G401 (cell line): ENCODE measurements at regions of chr17 and their contacts with region 1.

Region 1: DNA sequence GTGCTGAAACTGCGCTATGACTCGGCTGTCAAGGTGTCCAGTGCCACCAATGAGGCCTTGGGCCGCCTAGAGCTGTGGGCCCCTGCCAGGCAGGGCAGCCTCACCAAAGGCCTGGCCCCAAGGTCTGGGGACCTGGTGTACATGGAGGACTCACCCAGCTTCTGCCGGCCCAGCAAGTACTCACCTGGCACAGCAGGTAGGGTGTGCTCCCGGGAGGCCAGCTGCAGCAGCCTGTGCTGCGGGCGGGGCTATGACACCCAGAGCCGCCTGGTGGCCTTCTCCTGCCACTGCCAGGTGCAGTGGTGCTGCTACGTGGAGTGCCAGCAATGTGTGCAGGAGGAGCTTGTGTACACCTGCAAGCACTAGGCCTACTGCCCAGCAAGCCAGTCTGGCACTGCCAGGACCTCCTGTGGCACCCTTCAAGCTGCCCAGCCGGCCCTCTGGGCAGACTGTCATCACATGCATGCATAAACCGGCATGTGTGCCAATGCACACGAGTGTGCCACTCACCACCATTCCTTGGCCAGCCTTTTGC is 25.0 kb downstream of the WNT9B start:
- DNase-seq: peak; percentile 92

Region 2: DNA sequence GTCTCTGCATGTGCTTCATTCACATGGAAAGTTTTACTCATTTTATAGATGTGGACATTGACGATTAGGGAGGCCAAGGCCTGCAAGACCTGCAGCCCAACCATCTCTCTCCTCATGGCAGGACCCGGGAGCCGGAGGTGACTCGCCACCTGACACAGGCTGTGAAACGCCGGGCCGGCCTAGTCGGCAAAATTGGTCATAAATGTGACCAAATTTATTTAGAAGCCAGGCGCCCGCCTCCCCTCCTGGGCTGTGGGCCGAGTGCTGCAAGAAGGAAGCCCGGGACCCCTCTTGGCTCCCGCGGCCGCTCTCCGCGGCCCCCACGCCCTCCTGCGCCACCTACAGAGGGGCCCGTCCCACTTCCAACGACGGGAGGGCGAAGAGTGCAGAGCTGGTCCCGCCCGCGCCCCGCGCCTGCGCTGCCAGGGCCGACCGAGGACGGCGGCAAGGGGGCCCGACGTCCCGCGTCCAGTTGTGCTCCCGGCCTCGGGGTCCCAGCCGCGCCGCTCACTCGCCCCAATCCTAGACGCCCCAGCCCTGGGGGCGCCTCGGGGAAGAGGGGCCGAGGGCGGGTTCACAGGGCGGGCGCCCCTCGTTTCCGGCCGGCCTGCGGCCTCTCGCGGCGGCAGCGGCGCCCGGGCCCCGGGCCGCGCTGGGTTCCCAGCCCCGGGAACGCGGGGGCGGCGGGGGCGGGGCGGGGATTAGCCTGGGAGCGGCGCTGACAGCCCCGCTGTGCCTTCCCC is 105.4 kb before region 1 on chr17:
- in situ Hi-C with region 1: no loop called
- DNase-seq: peak; percentile 20

Region 3: GRCh38 chr17:46832945-46833839 is 43.2 kb before region 1 on chr17:
- in situ Hi-C with region 1: no loop called
- DNase-seq: peak; percentile 37

Region 4: GRCh38 chr17:46935658-46936266 is 59.3 kb after region 1 on chr17:
- in situ Hi-C with region 1: loop called (anchors 5 kb)
- DNase-seq: no peak

Region 5: GRCh38 chr17:46950997-46951621 is 74.7 kb after region 1 on chr17:
- in situ Hi-C with region 1: no loop called
- DNase-seq: no peak

Region 6: GRCh38 chr17:46976626-46977270 is 100.3 kb after region 1 on chr17:
- in situ Hi-C with region 1: no loop called
- DNase-seq: peak; percentile 82